ENCODE measurements at regions of chr1 and their contacts with region 1.

Region 1: DNA sequence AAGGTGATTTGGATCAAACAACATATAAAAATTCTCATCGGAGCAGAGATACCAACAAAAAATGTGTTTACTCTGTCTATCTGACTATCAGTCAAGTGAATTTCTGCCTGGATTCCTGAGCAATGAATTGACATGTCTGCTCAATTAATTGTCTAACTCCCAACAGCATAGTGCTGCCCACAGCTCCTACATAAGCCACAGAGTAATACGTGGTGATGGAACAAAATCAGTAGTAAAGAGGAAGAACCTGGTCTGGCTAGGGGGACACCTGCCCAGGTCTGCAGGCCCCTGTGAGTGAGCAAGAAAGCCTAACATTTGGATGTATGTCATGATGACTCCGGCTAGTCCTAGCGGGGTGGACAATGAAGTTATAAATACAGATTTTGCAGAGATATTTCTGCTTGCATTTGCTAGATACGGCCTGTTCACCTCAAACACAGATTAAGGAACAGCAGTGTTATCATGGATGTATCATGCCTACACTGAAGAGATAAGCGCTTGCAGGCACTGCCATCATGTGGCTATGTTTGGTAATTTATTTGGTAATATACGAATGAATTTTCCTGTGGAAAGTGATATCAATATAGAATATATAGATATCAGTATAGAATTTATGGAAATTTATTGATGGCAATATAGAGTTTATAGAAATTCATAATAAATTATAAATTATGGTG is 69.6 kb upstream of the LRRC8B start:
- DNase-seq: peak in 1 of 2 experiments; percentile 46
- H3K4me3 ChIP-seq: no peak overlapping the region
- H3K4me3 Mint-ChIP-seq: no peak overlapping the region
- H3K27ac Mint-ChIP-seq: no peak overlapping the region
- H3K4me1 ChIP-seq: no peaks in the 10 kb centered on the region
- H3K4me1 Mint-ChIP-seq: no peaks in the 10 kb centered on the region
- H3K27me3 ChIP-seq: no peaks in the 10 kb centered on the region
- H3K27me3 Mint-ChIP-seq: no peaks in the 10 kb centered on the region
- CTCF ChIP-seq: peak; percentile 37 to 51

Region 2: GRCh38 chr1:88973520-88974137 is 481.4 kb before region 1 on chr1:
- CTCF ChIA-PET with region 1: no interaction called
- POLR2A ChIA-PET with region 1: no interaction called
- intact Hi-C with region 1: loop called (anchors 1 kb)
- DNase-seq: no peak
- H3K4me3 ChIP-seq: no peak overlapping the region
- H3K4me3 Mint-ChIP-seq: no peak overlapping the region
- H3K27ac Mint-ChIP-seq: no peak overlapping the region
- H3K4me1 ChIP-seq: no peaks in the 10 kb centered on the region
- H3K4me1 Mint-ChIP-seq: no peaks in the 10 kb centered on the region
- H3K27me3 ChIP-seq: no peaks in the 10 kb centered on the region
- H3K27me3 Mint-ChIP-seq: no peaks in the 10 kb centered on the region
- CTCF ChIP-seq: peak; percentile 29 to 42

Region 3: DNA sequence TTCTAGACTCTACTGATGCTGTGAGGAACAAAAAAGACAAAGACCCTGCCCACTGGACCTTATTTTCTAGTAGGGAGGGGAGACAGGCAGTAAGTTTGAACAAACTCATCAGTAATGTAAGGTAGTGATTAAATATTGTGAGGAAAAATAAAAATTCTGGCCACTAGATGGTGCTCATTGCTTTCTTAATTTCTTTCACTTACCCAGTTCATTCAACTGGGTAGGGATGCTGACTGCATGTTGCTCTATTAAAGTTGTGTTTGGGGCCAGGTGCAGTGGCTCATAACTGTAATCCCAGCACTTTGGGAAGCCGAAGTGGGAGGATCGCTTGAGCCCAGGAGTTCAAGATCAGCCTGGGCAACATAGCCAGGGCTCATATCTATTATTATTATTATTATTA is 456.3 kb before region 1 on chr1:
- CTCF ChIA-PET with region 1: no interaction called
- POLR2A ChIA-PET with region 1: no interaction called
- intact Hi-C with region 1: loop called (anchors 1 kb)
- DNase-seq: peak in 1 of 2 experiments; percentile 53
- H3K4me3 ChIP-seq: no peak overlapping the region
- H3K4me3 Mint-ChIP-seq: no peak overlapping the region
- H3K27ac Mint-ChIP-seq: no peak overlapping the region
- H3K4me1 ChIP-seq: peaks cover 5% of the 10 kb centered on the region; the same call in 1 of the 2 replicates
- H3K4me1 Mint-ChIP-seq: no peaks in the 10 kb centered on the region
- H3K27me3 ChIP-seq: no peaks in the 10 kb centered on the region
- H3K27me3 Mint-ChIP-seq: no peaks in the 10 kb centered on the region
- CTCF ChIP-seq: peak in 1 of 2 experiments; percentile 39

Region 4: DNA sequence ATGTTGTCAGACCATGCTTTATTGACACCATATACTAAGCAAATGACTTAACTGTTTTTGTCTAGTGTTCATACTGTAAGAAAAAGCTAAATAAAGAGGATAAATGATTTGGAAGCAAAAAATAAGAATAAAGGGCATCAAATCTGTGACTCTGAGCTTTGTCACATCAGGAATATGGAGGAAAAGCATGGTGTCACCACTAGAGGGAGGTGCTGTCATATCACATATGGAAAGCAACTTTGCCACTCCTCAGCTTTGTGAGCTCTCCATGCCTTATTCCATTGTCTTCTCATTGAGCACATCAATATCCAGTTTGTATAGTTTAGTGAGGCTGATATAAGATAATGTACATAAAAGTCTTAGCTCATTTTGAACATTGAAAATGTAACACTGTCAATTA is 369.2 kb before region 1 on chr1:
- CTCF ChIA-PET with region 1: no interaction called
- POLR2A ChIA-PET with region 1: no interaction called
- intact Hi-C with region 1: loop called (anchors 2 kb)
- DNase-seq: peak; percentile 22 to 36
- H3K4me3 ChIP-seq: no peak overlapping the region
- H3K4me3 Mint-ChIP-seq: no peak overlapping the region
- H3K27ac Mint-ChIP-seq: no peak overlapping the region
- H3K4me1 ChIP-seq: peaks cover 6% of the 10 kb centered on the region; the same call in 1 of the 2 replicates
- H3K4me1 Mint-ChIP-seq: no peaks in the 10 kb centered on the region
- H3K27me3 ChIP-seq: no peaks in the 10 kb centered on the region
- H3K27me3 Mint-ChIP-seq: no peaks in the 10 kb centered on the region
- CTCF ChIP-seq: peak; percentile 34 to 35

Region 5: DNA sequence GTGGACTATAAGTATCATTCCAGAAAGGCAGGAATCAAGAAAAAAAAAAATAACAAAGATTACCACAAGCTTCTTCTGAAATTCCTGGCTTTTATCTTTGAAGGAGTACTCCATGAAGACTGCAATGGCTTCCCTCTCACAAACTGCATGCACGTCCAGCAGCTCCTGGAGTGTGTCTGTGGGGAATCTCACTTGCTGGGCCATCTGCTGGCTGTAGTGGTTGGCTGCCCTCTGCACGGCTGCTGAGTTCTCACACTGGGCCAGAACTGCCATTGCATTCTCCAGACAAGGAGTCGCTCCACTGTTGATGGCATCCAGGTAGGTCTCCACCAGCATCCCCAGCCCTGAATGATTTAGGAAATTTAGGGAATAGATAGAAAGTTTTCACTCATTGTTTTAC is 305.8 kb before region 1 on chr1:
- CTCF ChIA-PET with region 1: no interaction called
- POLR2A ChIA-PET with region 1: no interaction called
- intact Hi-C with region 1: loop called (anchors 10 kb)
- DNase-seq: peak; percentile 35 to 53
- H3K4me3 ChIP-seq: no peak overlapping the region
- H3K4me3 Mint-ChIP-seq: no peak overlapping the region
- H3K27ac Mint-ChIP-seq: no peak overlapping the region
- H3K4me1 ChIP-seq: no peaks in the 10 kb centered on the region
- H3K4me1 Mint-ChIP-seq: no peaks in the 10 kb centered on the region
- H3K27me3 ChIP-seq: no peaks in the 10 kb centered on the region
- H3K27me3 Mint-ChIP-seq: no peaks in the 10 kb centered on the region
- CTCF ChIP-seq: peak in 1 of 2 experiments; percentile 28

Region 6: GRCh38 chr1:89358287-89358893 is 96.6 kb before region 1 on chr1:
- CTCF ChIA-PET with region 1: no interaction called
- POLR2A ChIA-PET with region 1: no interaction called
- intact Hi-C with region 1: loop called (anchors 2 kb)
- DNase-seq: peak; percentile 68 to 69
- H3K4me3 ChIP-seq: no peak overlapping the region
- H3K4me3 Mint-ChIP-seq: peak overlapping the region; percentile 13
- H3K27ac Mint-ChIP-seq: no peak overlapping the region
- H3K4me1 ChIP-seq: peaks cover 19% of the 10 kb centered on the region
- H3K4me1 Mint-ChIP-seq: peaks cover 14% of the 10 kb centered on the region
- H3K27me3 ChIP-seq: no peaks in the 10 kb centered on the region
- H3K27me3 Mint-ChIP-seq: no peaks in the 10 kb centered on the region
- CTCF ChIP-seq: peak; percentile 43 to 57

Region 7: GRCh38 chr1:89381618-89382017 is 73.4 kb before region 1 on chr1:
- CTCF ChIA-PET with region 1: no interaction called
- POLR2A ChIA-PET with region 1: no interaction called
- intact Hi-C with region 1: loop called (anchors 1 kb)
- DNase-seq: peak in 1 of 2 experiments; percentile 9
- H3K4me3 ChIP-seq: no peak overlapping the region
- H3K4me3 Mint-ChIP-seq: no peak overlapping the region
- H3K27ac Mint-ChIP-seq: no peak overlapping the region
- H3K4me1 ChIP-seq: no peaks in the 10 kb centered on the region
- H3K4me1 Mint-ChIP-seq: no peaks in the 10 kb centered on the region
- H3K27me3 ChIP-seq: no peaks in the 10 kb centered on the region
- H3K27me3 Mint-ChIP-seq: peaks cover 3% of the 10 kb centered on the region
- CTCF ChIP-seq: no peak

Region 8: DNA sequence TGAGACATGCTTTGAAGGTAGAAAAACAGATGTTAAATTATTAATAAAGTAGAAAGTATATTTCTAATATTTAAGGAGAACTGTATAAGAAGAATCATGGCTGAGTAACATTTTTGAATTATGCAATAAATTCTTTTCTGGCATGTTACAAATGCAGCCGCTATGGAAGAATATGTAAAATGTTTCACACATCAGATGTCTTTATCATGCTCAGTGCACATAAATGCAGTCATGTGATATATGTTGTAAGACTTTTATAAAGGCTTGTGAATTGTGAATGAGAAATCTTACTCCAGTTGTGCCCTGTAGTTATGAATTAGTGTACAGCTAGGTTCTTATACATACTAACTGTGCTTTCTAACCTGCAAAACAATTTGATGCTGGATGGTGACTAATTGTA is 123.2 kb after region 1 on chr1:
- CTCF ChIA-PET with region 1: no interaction called
- POLR2A ChIA-PET with region 1: no interaction called
- intact Hi-C with region 1: no loop called
- DNase-seq: no peak
- H3K4me3 ChIP-seq: no peak overlapping the region
- H3K4me3 Mint-ChIP-seq: no peak overlapping the region
- H3K27ac Mint-ChIP-seq: no peak overlapping the region
- H3K4me1 ChIP-seq: no peaks in the 10 kb centered on the region
- H3K4me1 Mint-ChIP-seq: no peaks in the 10 kb centered on the region
- H3K27me3 ChIP-seq: no peaks in the 10 kb centered on the region
- H3K27me3 Mint-ChIP-seq: no peaks in the 10 kb centered on the region
- CTCF ChIP-seq: no peak

Measured in Caco-2 (cell line).